B cell (primary cell): ENCODE measurements at regions of chr11 and their contacts with region 1.

Region 1: GRCh38 chr11:62591448-62592145 is at the start of gene TUT1:
- DNase-seq: peak; percentile 99
- ATAC-seq: peak; percentile 89
- H3K4me3 ChIP-seq: peak within 1 kb of the TSS; percentile 85 to 97 (median 93)
- H3K4me3 Mint-ChIP-seq: peak within 1 kb of the TSS; percentile 91
- H3K27ac ChIP-seq: peak within 1 kb of the TSS; percentile 90
- H3K27ac Mint-ChIP-seq: peak within 1 kb of the TSS; percentile 96
- H3K4me1 ChIP-seq: peaks cover 23 to 34% of the 10 kb centered on the region in 2 donors
- H3K4me1 Mint-ChIP-seq: peaks cover 43% of the 10 kb centered on the region
- H3K27me3 ChIP-seq: no peaks in the 10 kb centered on the region
- H3K27me3 Mint-ChIP-seq: no peaks in the 10 kb centered on the region
- CTCF ChIP-seq: no peak
- total RNA-seq, gene TUT1: 33.8 and 47.7 TPM in 2 replicates

Region 2: DNA sequence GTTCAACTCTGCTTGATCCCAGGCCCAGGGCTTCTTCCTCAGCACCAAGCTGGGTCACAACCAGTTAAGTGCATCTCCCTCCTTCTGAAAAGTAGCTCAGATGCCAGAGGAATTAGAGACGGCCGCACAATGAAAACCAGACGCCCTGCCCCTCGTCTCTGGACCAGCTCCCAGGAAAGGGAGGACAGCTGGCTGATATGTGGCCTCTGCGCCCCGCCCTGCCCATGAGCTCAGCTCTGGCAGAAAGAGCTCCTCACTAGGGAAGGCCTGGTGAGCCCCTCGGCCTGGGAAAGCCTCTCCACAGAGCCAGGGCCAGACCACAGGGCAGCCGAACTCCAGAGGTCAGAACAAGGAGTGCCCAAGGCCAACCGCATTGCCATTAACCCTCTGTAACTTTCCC is 190.8 kb before region 1 on chr11:
- CTCF ChIA-PET with region 1: no interaction called
- POLR2A ChIA-PET with region 1: no interaction called
- intact Hi-C with region 1: no loop called
- DNase-seq: no peak
- ATAC-seq: no peak
- H3K4me3 ChIP-seq: no peak overlapping the region
- H3K4me3 Mint-ChIP-seq: no peak overlapping the region
- H3K27ac ChIP-seq: no peak overlapping the region
- H3K27ac Mint-ChIP-seq: no peak overlapping the region
- H3K4me1 ChIP-seq: peaks cover 9 to 11% of the 10 kb centered on the region in 2 donors
- H3K4me1 Mint-ChIP-seq: peaks cover 9% of the 10 kb centered on the region
- H3K27me3 ChIP-seq: peaks cover 0 to 8% (median 0%) of the 10 kb centered on the region in 4 experiments
- H3K27me3 Mint-ChIP-seq: peaks cover 18% of the 10 kb centered on the region
- CTCF ChIP-seq: no peak

Region 3: DNA sequence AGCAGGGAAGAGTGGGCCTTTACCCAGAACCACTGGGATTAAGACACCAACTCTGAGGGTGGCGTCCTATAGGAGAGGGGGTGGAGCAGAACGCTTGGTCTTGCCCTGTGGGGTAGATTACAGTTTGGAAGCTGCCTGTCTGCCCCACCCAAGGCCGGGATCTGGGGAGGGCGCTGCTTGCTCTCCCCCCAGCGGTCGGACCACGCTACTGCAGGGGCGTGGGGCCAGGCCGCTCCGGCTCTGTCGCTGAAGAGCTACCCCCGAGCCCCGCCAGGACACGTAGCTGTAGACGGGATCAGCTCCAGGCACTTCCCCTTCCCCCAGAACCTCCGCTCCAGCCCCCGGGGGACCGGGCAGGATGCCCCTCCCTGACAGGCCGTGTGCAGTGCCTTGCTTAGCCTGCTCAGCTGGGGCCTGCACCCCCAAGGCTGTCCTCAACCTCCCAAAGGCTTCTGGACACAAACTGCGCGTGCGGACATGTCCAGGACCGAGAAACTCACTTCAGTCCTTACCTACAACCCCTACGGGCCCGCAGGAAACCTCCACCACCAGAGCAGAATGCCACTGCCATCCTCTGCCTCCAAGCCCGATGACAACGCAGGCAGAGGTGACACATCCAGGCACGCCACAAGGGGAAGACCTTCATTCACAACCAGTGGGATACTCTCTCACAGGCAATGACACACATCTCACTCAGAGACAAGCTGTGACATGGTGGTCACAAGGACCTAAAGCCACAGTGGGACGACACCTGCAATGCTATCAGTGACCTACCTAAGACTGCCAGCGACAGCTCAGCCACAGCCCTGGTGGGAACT is 48.6 kb before region 1 on chr11:
- CTCF ChIA-PET with region 1: interaction called, 15 read pairs
- POLR2A ChIA-PET with region 1: interaction called, 6 read pairs
- intact Hi-C with region 1: loop called (anchors 5 kb)
- DNase-seq: peak; percentile 84
- ATAC-seq: peak; percentile 44
- H3K4me3 ChIP-seq: peak overlapping the region in 4 of 5 experiments; percentile 38 to 99 (median 94)
- H3K4me3 Mint-ChIP-seq: peak overlapping the region; percentile 97
- H3K27ac ChIP-seq: peak overlapping the region; percentile 91 to 94
- H3K27ac Mint-ChIP-seq: peak overlapping the region; percentile 97
- H3K4me1 ChIP-seq: peaks cover 70 to 87% of the 10 kb centered on the region in 2 donors
- H3K4me1 Mint-ChIP-seq: peaks cover 84% of the 10 kb centered on the region
- H3K27me3 ChIP-seq: no peaks in the 10 kb centered on the region
- H3K27me3 Mint-ChIP-seq: no peaks in the 10 kb centered on the region
- CTCF ChIP-seq: peak; percentile 98

Region 4: DNA sequence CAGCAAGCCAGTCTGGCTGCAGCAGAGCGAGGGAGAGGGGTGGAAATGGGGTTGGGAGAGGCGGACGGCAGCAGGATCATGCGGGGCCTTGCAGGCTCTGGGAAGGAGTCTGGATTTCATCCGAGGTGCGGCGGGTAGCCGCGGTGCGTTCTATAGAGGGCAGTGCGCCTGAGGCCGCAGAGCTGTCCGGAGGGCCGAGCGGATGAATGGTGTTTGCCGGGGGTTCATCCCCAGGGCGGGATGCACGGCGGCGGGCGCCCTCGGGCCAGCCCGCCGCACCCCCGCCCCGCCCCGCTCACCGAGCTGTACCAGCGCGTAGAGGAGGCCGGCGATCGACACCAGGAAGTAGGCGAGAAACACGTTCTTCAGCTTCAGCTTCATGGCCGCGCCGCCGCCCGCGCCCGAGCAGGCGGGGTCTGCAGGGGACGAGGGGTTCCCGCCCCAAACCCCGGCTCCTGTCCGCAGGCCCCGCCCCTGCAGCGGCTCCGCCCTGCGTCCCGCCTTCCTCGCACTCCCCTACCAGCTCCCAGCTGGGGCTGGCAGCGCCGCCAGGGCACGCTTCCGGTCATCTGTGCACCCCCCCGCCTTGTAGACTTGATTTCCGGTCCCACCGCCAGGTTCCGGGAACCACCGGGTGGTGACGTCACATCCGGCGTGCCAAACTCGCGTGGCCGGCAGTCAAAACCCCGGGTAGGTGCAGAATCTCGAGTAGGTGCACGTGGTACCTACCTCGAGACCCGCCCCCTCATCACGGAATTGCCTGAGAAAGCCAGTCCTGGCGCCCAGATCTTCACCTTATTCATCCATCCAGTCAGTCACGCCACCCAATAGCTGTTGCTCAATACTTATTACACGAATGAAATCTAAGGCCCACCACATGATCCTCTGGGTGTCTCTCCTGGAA is 30.2 kb after region 1 on chr11 and contains the start of gene B3GAT3:
- CTCF ChIA-PET with region 1: interaction called, 35 read pairs
- POLR2A ChIA-PET with region 1: interaction called, 33 read pairs
- intact Hi-C with region 1: loop called (anchors 1 kb)
- DNase-seq: peak; percentile 99
- ATAC-seq: peak; percentile 92
- H3K4me3 ChIP-seq: peak within 1 kb of the TSS; percentile 80 to 93 (median 88)
- H3K4me3 Mint-ChIP-seq: peak within 1 kb of the TSS; percentile 98
- H3K27ac ChIP-seq: peak within 1 kb of the TSS; percentile 88 to 98
- H3K27ac Mint-ChIP-seq: peak within 1 kb of the TSS; percentile 95
- H3K4me1 ChIP-seq: peaks cover 11 to 19% of the 10 kb centered on the region in 2 donors
- H3K4me1 Mint-ChIP-seq: peaks cover 23% of the 10 kb centered on the region
- H3K27me3 ChIP-seq: no peaks in the 10 kb centered on the region
- H3K27me3 Mint-ChIP-seq: no peaks in the 10 kb centered on the region
- CTCF ChIP-seq: no peak
- total RNA-seq, gene B3GAT3: 63.1 and 66.6 TPM in 2 replicates

Region 5: DNA sequence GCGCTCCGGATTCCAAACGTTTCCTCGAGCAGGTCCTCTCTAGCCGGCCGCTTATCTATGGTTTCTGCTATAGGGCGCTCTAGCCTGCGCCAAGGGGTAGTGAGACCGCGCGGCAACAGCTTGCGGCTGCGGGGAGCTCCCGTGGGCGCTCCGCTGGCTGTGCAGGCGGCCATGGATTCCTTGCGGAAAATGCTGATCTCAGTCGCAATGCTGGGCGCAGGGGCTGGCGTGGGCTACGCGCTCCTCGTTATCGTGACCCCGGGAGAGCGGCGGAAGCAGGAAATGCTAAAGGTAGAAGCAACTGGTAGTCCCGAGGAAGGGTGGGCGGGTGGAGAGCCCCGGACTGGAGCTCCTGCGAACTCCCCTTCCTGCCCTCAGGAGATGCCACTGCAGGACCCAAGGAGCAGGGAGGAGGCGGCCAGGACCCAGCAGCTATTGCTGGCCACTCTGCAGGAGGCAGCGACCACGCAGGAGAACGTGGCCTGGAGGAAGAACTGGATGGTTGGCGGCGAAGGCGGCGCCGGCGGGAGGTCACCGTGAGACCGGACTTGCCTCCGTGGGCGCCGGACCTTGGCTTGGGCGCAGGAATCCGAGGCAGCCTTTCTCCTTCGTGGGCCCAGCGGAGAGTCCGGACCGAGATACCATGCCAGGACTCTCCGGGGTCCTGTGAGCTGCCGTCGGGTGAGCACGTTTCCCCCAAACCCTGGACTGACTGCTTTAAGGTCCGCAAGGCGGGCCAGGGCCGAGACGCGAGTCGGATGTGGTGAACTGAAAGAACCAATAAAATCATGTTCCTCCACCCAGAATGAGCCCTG is 80.2 kb after region 1 on chr11 and contains the starts of genes LBHD1 and UQCC3:
- CTCF ChIA-PET with region 1: interaction called, 7 read pairs
- POLR2A ChIA-PET with region 1: interaction called, 13 read pairs
- intact Hi-C with region 1: no loop called
- DNase-seq: peak; percentile 86
- ATAC-seq: peak; percentile 77
- H3K4me3 ChIP-seq: peak within 1 kb of the TSS; percentile 85 to 97 (median 87)
- H3K4me3 Mint-ChIP-seq: peak within 1 kb of the TSS; percentile 100
- H3K27ac ChIP-seq: peak within 1 kb of the TSS; percentile 56 to 71
- H3K27ac Mint-ChIP-seq: peak within 1 kb of the TSS; percentile 97
- H3K4me1 ChIP-seq: peaks cover 21 to 36% of the 10 kb centered on the region in 2 donors
- H3K4me1 Mint-ChIP-seq: peaks cover 48% of the 10 kb centered on the region
- H3K27me3 ChIP-seq: no peaks in the 10 kb centered on the region
- H3K27me3 Mint-ChIP-seq: no peaks in the 10 kb centered on the region
- CTCF ChIP-seq: no peak
- total RNA-seq, gene LBHD1: 32.5 and 33.3 TPM in 2 replicates
- total RNA-seq, gene UQCC3: 6.5 and 8.9 TPM in 2 replicates

Region 6: GRCh38 chr11:62719302-62719978 is 127.8 kb after region 1 on chr11:
- CTCF ChIA-PET with region 1: no interaction called
- POLR2A ChIA-PET with region 1: no interaction called
- intact Hi-C with region 1: no loop called
- DNase-seq: no peak
- ATAC-seq: no peak
- H3K4me3 ChIP-seq: no peak overlapping the region
- H3K4me3 Mint-ChIP-seq: no peak overlapping the region
- H3K27ac ChIP-seq: no peak overlapping the region
- H3K27ac Mint-ChIP-seq: no peak overlapping the region
- H3K4me1 ChIP-seq: peaks cover 8 to 11% of the 10 kb centered on the region in 2 donors
- H3K4me1 Mint-ChIP-seq: peaks cover 27% of the 10 kb centered on the region
- H3K27me3 ChIP-seq: no peaks in the 10 kb centered on the region
- H3K27me3 Mint-ChIP-seq: no peaks in the 10 kb centered on the region
- CTCF ChIP-seq: no peak

Region 7: GRCh38 chr11:62753736-62754603 is 162.4 kb after region 1 on chr11 and contains the start of gene ZBTB3:
- CTCF ChIA-PET with region 1: interaction called, 6 read pairs
- POLR2A ChIA-PET with region 1: interaction called, 12 read pairs
- intact Hi-C with region 1: no loop called
- DNase-seq: peak; percentile 99
- ATAC-seq: peak; percentile 92
- H3K4me3 ChIP-seq: peak within 1 kb of the TSS; percentile 82 to 94 (median 86)
- H3K4me3 Mint-ChIP-seq: peak within 1 kb of the TSS; percentile 99
- H3K27ac ChIP-seq: peak within 1 kb of the TSS; percentile 80 to 84
- H3K27ac Mint-ChIP-seq: peak within 1 kb of the TSS; percentile 99
- H3K4me1 ChIP-seq: peaks cover 7 to 21% of the 10 kb centered on the region in 2 donors
- H3K4me1 Mint-ChIP-seq: peaks cover 27% of the 10 kb centered on the region
- H3K27me3 ChIP-seq: no peaks in the 10 kb centered on the region
- H3K27me3 Mint-ChIP-seq: no peaks in the 10 kb centered on the region
- CTCF ChIP-seq: no peak
- total RNA-seq, gene ZBTB3: 22.0 and 24.8 TPM in 2 replicates

Region 8: DNA sequence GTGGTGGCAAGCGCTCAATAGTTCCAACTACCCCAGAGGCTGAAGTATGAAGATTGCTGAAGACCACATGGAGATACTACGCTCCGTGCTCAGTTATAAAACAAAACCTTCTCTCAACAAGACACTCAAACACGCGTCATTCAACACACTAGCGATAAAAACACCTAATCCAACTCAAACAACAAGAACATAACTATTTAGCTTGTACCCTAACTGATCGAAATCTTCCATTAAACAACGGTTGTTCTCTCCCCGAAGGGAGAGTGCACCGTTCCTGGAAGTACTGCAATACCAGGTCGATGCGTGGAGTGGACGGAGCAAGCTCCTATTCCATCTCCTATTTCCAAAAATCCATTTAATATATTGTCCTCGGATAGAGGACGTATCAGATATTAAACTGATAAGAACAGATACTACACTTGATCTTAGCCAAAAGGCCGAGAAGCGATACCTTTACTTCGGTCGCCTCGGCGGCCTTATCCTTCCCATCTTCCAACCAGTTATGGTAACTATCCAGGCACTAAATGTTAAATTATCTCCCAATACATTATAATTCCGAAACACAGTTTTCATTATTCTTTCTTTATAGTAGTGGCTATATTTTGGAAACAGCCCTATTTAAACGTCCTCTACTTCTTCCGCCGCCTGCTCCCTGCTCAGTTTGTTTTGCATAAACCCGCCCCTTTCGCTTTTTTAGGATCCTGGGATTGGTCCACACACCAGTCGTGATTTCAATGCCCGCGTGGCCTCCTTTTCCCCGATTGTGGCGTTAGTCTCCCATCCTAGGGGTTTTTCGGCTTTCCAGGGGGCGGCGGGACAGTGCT is 250.0 kb after region 1 on chr11:
- CTCF ChIA-PET with region 1: interaction called, 3 read pairs
- POLR2A ChIA-PET with region 1: interaction called, 15 read pairs
- intact Hi-C with region 1: loop called (anchors 5 kb)
- DNase-seq: peak; percentile 95
- ATAC-seq: peak; percentile 58
- H3K4me3 ChIP-seq: peak overlapping the region; percentile 61 to 97 (median 91)
- H3K4me3 Mint-ChIP-seq: no peak overlapping the region
- H3K27ac ChIP-seq: peak overlapping the region; percentile 99 to 100
- H3K27ac Mint-ChIP-seq: no peak overlapping the region
- H3K4me1 ChIP-seq: peaks cover 14 to 33% of the 10 kb centered on the region in 2 donors
- H3K4me1 Mint-ChIP-seq: peaks cover 18% of the 10 kb centered on the region
- H3K27me3 ChIP-seq: no peaks in the 10 kb centered on the region
- H3K27me3 Mint-ChIP-seq: no peaks in the 10 kb centered on the region
- CTCF ChIP-seq: no peak